Activated CD4-positive, alpha-beta T cell treated with anti-CD3 and anti-CD28 coated beads, Interleukin-2, amount 10 ng/mL, durations not matched to agents 24 days and 14 days (primary cell): ENCODE measurements at regions of chr2 and their contacts with region 1.

Region 1: GRCh38 chr2:195477248-195477995 is 179.6 kb upstream of the SLC39A10 start:
- DNase-seq: no peak
- H3K4me3 Mint-ChIP-seq: no peak overlapping the region
- H3K27ac Mint-ChIP-seq: peak overlapping the region; percentile 65
- H3K4me1 Mint-ChIP-seq: peaks cover 36% of the 10 kb centered on the region
- H3K27me3 Mint-ChIP-seq: no peaks in the 10 kb centered on the region

Region 2: GRCh38 chr2:194464964-194465638 is 1012.3 kb before region 1 on chr2:
- intact Hi-C with region 1: loop called (anchors 10 kb)
- DNase-seq: peak; percentile 68
- H3K4me3 Mint-ChIP-seq: no peak overlapping the region
- H3K27ac Mint-ChIP-seq: no peak overlapping the region
- H3K4me1 Mint-ChIP-seq: no peaks in the 10 kb centered on the region
- H3K27me3 Mint-ChIP-seq: no peaks in the 10 kb centered on the region

Region 3: DNA sequence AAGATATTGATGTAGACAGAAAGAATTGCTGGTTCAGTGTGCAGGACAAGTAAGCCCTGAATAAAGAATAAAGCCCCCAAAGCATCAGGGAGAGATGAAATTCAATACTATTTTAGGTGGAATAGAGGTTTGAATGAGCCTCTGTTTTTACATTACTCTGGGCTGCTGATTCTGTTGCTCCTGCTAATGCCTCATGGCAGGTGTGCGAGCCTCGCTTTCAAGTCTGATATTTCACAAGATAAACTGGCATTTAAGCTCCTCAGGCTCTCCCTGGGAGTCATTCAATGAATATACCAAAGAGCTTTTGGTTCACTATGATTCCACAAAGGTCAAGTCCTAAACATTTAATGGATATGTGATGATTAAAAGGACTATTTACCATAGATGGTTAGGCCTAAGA is 421.4 kb before region 1 on chr2:
- intact Hi-C with region 1: no loop called
- DNase-seq: no peak
- H3K4me3 Mint-ChIP-seq: no peak overlapping the region
- H3K27ac Mint-ChIP-seq: no peak overlapping the region
- H3K4me1 Mint-ChIP-seq: no peaks in the 10 kb centered on the region
- H3K27me3 Mint-ChIP-seq: no peaks in the 10 kb centered on the region

Region 4: GRCh38 chr2:195498176-195498575 is 20.8 kb after region 1 on chr2:
- intact Hi-C with region 1: loop called (anchors 2 kb)
- DNase-seq: peak; percentile 78
- H3K4me3 Mint-ChIP-seq: no peak overlapping the region
- H3K27ac Mint-ChIP-seq: peak overlapping the region; percentile 10
- H3K4me1 Mint-ChIP-seq: peaks cover 38% of the 10 kb centered on the region
- H3K27me3 Mint-ChIP-seq: no peaks in the 10 kb centered on the region

Region 5: DNA sequence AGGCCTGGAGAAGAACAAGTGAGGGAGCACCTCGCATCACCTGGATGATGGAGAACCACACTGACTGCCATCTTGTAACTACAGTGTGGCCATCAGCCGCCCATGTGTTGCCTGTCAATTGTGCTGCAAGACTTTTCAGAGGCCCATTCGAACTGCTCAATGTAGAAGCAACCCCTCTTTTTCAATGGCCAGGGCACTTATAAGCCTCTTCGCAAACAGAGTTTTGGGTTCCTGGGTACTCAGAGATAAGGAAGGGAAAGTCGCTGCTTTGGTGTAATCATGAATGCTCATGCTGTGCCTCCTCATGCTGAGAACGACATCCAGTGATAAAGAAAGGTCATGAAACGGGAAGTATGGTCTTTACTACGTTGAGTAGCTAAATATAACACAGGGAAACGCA is 35.7 kb after region 1 on chr2:
- intact Hi-C with region 1: no loop called
- DNase-seq: no peak
- H3K4me3 Mint-ChIP-seq: no peak overlapping the region
- H3K27ac Mint-ChIP-seq: no peak overlapping the region
- H3K4me1 Mint-ChIP-seq: peaks cover 10% of the 10 kb centered on the region
- H3K27me3 Mint-ChIP-seq: no peaks in the 10 kb centered on the region

Region 6: GRCh38 chr2:196535742-196536141 is 1058.3 kb after region 1 on chr2:
- intact Hi-C with region 1: no loop called
- DNase-seq: peak; percentile 0
- H3K4me3 Mint-ChIP-seq: no peak overlapping the region
- H3K27ac Mint-ChIP-seq: no peak overlapping the region
- H3K4me1 Mint-ChIP-seq: peaks cover 18% of the 10 kb centered on the region
- H3K27me3 Mint-ChIP-seq: peaks cover 9% of the 10 kb centered on the region